ENCODE measurements at regions of chr13 and their contacts with region 1.

Region 1: DNA sequence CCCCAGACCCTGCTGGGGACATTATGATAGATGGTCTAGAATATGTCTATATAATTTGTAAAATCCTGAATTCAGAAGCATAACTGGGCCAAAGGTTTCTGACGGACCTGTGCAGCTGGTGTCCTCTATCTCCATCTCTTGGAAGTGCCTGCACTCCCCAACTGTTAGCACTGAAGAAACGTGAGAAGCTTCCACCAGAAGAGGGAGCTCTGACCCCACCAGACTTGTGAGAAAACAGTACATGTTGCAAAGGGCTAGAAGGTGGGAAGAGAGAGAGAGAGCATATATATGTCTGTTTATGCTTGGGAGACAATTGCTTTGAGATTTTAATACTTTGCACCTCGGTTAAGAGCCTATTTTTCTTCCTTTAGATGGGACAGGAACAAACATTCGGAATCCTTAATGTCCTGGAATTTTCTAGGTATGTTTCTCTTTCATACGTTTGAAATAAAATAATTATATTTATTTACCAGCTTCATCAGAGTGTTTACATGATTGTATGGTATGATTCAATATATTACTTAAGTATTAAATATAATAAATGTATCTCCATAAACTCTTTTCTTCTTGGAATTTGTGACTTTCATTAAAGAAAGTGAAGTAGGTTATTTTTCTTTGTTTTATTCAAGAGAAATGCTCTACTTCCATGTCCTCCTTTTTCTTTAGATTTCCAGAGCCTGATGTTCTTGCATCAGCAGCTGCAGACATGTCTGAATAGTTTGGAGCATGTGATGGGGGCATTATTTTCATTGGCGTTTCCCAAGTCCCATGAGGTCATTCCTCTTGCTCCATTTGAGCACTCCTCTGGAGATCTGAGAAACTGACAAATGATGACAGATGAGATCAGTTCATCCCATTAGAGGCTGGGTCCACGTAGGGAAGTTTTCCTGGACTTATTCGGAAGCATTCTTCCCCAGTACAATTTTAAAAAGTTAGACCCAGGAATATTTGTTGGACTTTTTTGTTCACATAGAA is 202.9 kb downstream of the ATP8A2 start:
- DNase-seq: no peak
- H3K4me3 ChIP-seq: no peak overlapping the region
- H3K27ac ChIP-seq: no peak overlapping the region
- H3K4me1 ChIP-seq: no peaks in the 10 kb centered on the region
- H3K27me3 ChIP-seq: peaks cover 0 to 16% (median 0%) of the 10 kb centered on the region in 4 donors
- CTCF ChIP-seq: peak; percentile 58 to 69 (median 69)
- EP300 ChIP-seq: no peak
- POLR2A ChIP-seq: no peak

Region 2: DNA sequence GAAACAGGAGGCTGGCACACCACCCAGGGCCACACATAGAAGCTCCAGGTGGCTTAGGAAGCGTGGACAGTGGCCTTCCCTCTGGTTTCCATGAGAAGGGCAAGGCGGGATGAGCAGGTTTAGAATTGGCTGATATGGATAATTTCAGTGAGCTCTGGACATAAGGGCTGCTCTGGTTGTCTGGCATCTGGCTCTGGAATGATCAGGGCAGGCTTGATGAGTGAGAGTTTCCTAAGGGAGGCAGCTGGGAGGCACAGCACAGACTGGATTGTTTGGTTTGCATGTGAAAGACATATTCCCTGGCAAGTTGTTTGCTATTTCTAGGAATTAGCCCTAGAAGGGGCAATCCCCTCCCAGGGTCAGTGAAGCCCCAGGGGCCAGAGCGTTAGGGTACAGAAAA is 73.5 kb before region 1 on chr13:
- intact Hi-C with region 1: no loop called
- DNase-seq: peak; percentile 88
- H3K4me3 ChIP-seq: no peak overlapping the region
- H3K27ac ChIP-seq: no peak overlapping the region
- H3K4me1 ChIP-seq: no peaks in the 10 kb centered on the region
- H3K27me3 ChIP-seq: peaks cover 0 to 17% (median 0%) of the 10 kb centered on the region in 4 donors
- CTCF ChIP-seq: no peak
- EP300 ChIP-seq: no peak
- POLR2A ChIP-seq: no peak

Region 3: GRCh38 chr13:26074706-26075105 is 500.0 kb after region 1 on chr13:
- intact Hi-C with region 1: loop called (anchors 5 kb)
- DNase-seq: peak; percentile 57
- H3K4me3 ChIP-seq: no peak overlapping the region
- H3K27ac ChIP-seq: no peak overlapping the region
- H3K4me1 ChIP-seq: no peaks in the 10 kb centered on the region
- H3K27me3 ChIP-seq: peaks cover 0 to 23% (median 0%) of the 10 kb centered on the region in 4 donors
- CTCF ChIP-seq: no peak
- EP300 ChIP-seq: no peak
- POLR2A ChIP-seq: no peak

Measured in esophagus muscularis mucosa (tissue), 4 donors.